T-cell (primary cell): ENCODE measurements at regions of chr12 and their contacts with region 1.

Region 1: GRCh38 chr12:56315622-56316473 is at the start of gene CNPY2:
- DNase-seq: peak; percentile 86 to 97 (median 91)
- ATAC-seq: peak; percentile 90 to 94 (median 92)
- H3K4me3 ChIP-seq: peak within 1 kb of the TSS; percentile 66 to 96
- H3K4me3 Mint-ChIP-seq: peak within 1 kb of the TSS; percentile 97 to 99 (median 97)
- H3K27ac ChIP-seq: peak within 1 kb of the TSS; percentile 79
- H3K27ac Mint-ChIP-seq: peak within 1 kb of the TSS; percentile 97 to 99
- H3K4me1 ChIP-seq: peaks cover 9 to 17% of the 10 kb centered on the region in 2 experiments
- H3K4me1 Mint-ChIP-seq: peaks cover 11 to 19% (median 19%) of the 10 kb centered on the region in 3 donors
- H3K27me3 ChIP-seq: no peaks in the 10 kb centered on the region
- H3K27me3 Mint-ChIP-seq: no peaks in the 10 kb centered on the region
- total RNA-seq, gene CNPY2: 52.9 to 92.8 (median 90.8) TPM

Region 2: DNA sequence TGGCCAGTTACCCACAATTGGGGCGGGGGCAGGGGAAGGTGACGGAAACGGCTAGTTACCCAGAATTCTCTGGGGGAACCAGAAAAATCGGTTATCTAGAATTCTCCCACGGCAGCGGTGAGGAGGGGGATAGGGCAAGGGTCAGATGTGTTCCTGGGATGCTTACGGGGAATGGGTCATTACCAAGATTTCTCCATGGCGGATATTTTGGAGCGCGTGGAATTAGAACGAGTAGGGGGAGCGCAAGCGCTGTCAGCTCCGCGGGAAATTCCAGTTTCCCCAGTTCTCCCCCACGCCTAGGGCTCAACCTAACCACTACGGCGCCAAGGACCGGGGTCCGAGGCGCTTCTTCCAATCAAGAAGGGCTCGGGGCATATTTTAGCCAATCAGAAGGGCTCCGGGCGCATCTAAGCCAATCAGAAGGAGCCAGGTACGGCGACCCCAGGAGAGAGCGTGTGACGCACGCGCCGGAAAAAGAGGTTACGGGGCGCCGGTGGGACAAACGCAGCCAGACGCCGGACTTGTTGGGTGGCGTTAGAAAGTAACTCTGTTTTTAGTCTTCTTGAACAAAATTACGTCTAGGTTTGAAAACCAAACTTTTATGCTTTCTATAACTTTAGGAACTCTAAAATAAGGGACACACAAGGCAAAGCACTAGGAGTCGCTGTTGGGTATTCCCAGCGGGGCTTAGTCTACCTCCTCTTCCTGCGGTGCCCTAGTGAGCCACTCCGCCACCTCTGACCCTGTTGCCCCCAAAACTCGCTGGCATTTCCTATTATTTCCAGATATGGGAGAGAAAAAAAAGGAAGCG is 18.0 kb after region 1 on chr12 and contains the start of gene PAN2:
- CTCF ChIA-PET with region 1: interaction called, 7 read pairs
- POLR2A ChIA-PET with region 1: interaction called in 1 of 2 experiments, 12 read pairs
- DNase-seq: peak; percentile 77 to 97 (median 93)
- ATAC-seq: peak; percentile 84 to 85 (median 85)
- H3K4me3 ChIP-seq: peak within 1 kb of the TSS; percentile 63 to 88
- H3K4me3 Mint-ChIP-seq: peak within 1 kb of the TSS; percentile 85 to 97 (median 92)
- H3K27ac ChIP-seq: peak within 1 kb of the TSS; percentile 98
- H3K27ac Mint-ChIP-seq: peak within 1 kb of the TSS; percentile 100
- H3K4me1 ChIP-seq: peaks cover 10 to 34% of the 10 kb centered on the region in 2 experiments
- H3K4me1 Mint-ChIP-seq: peaks cover 43 to 53% (median 47%) of the 10 kb centered on the region in 3 donors
- H3K27me3 ChIP-seq: no peaks in the 10 kb centered on the region
- H3K27me3 Mint-ChIP-seq: no peaks in the 10 kb centered on the region
- total RNA-seq, gene PAN2: 126 to 187 (median 164) TPM

Region 3: GRCh38 chr12:56359851-56360767 is 44.3 kb after region 1 on chr12 and contains the start of gene STAT2:
- CTCF ChIA-PET with region 1: interaction called in 1 of 2 experiments, 21 read pairs
- POLR2A ChIA-PET with region 1: interaction called, 6 to 17 read pairs
- DNase-seq: peak; percentile 97 to 100 (median 99)
- ATAC-seq: peak; percentile 95 to 98 (median 96)
- H3K4me3 ChIP-seq: peak within 1 kb of the TSS; percentile 75 to 85
- H3K4me3 Mint-ChIP-seq: peak within 1 kb of the TSS; percentile 84 to 96 (median 95)
- H3K27ac ChIP-seq: peak within 1 kb of the TSS; percentile 52
- H3K27ac Mint-ChIP-seq: peak within 1 kb of the TSS; percentile 94 to 98
- H3K4me1 ChIP-seq: peaks cover 8 to 24% of the 10 kb centered on the region in 2 experiments
- H3K4me1 Mint-ChIP-seq: peaks cover 29 to 37% (median 36%) of the 10 kb centered on the region in 3 donors
- H3K27me3 ChIP-seq: no peaks in the 10 kb centered on the region
- H3K27me3 Mint-ChIP-seq: no peaks in the 10 kb centered on the region
- total RNA-seq, gene STAT2: 117 to 187 (median 162) TPM

Region 4: GRCh38 chr12:56461235-56462159 is 145.6 kb after region 1 on chr12:
- CTCF ChIA-PET with region 1: interaction called, 4 to 15 read pairs
- POLR2A ChIA-PET with region 1: interaction called in 1 of 2 experiments, 5 read pairs
- DNase-seq: no peak
- ATAC-seq: no peak
- H3K4me3 ChIP-seq: no peak overlapping the region
- H3K4me3 Mint-ChIP-seq: no peak overlapping the region
- H3K27ac ChIP-seq: no peak overlapping the region
- H3K27ac Mint-ChIP-seq: no peak overlapping the region
- H3K4me1 ChIP-seq: peaks cover 0 to 5% of the 10 kb centered on the region in 2 experiments
- H3K4me1 Mint-ChIP-seq: peaks cover 4 to 6% (median 4%) of the 10 kb centered on the region in 3 donors
- H3K27me3 ChIP-seq: no peaks in the 10 kb centered on the region
- H3K27me3 Mint-ChIP-seq: no peaks in the 10 kb centered on the region

Region 5: DNA sequence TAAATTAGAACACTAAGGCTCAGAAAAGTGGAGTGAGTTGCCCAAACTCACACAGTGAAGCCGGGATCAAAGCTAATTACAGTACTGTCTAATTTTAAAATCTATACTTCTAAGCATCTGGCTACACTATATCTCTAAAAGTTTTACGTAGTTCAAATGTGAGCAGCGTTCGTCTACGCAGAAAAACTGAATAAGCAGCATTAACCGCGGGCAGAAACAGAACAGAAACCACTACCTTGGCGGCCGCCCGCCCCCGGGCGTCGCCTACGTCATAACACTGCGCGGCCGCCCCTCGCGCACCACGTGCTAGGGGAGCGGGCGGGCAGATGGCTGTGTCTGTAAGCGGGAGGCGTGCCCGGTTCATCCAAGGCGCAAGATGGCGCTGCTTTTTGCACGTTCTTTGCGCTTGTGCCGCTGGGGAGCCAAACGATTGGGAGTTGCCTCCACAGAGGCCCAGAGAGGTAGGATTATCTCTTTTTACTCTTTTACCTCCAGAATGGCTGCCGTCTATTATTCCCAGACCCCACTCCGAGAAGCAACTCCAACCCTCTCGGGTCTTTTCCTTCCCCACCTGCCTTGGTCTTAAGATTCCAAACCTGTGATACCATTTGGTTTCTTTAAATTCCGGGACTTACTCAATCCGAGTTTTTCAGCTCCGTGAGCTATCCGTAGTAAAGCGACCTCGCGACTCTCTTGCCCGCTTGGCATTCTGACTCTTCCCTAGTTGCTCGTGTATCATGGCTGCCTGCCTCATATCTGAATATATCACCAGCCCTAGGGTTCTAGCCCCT is 152.6 kb after region 1 on chr12 and contains the start of gene SPRYD4:
- CTCF ChIA-PET with region 1: interaction called, 4 to 15 read pairs
- POLR2A ChIA-PET with region 1: interaction called in 1 of 2 experiments, 12 read pairs
- DNase-seq: peak; percentile 86 to 97 (median 93)
- ATAC-seq: peak; percentile 94 to 98 (median 96)
- H3K4me3 ChIP-seq: peak within 1 kb of the TSS; percentile 68 to 84
- H3K4me3 Mint-ChIP-seq: peak within 1 kb of the TSS; percentile 94 to 97 (median 94)
- H3K27ac ChIP-seq: peak within 1 kb of the TSS; percentile 82
- H3K27ac Mint-ChIP-seq: peak within 1 kb of the TSS; percentile 89 to 98
- H3K4me1 ChIP-seq: peaks cover 5 to 23% of the 10 kb centered on the region in 2 experiments
- H3K4me1 Mint-ChIP-seq: peaks cover 29 to 33% (median 32%) of the 10 kb centered on the region in 3 donors
- H3K27me3 ChIP-seq: no peaks in the 10 kb centered on the region
- H3K27me3 Mint-ChIP-seq: no peaks in the 10 kb centered on the region
- total RNA-seq, gene SPRYD4: 4.7 to 7.3 (median 5.5) TPM

Region 6: GRCh38 chr12:56616925-56617324 is 301.1 kb after region 1 on chr12:
- CTCF ChIA-PET with region 1: no interaction called
- POLR2A ChIA-PET with region 1: no interaction called
- DNase-seq: no peak
- ATAC-seq: no peak
- H3K4me3 ChIP-seq: no peak overlapping the region
- H3K4me3 Mint-ChIP-seq: no peak overlapping the region
- H3K27ac ChIP-seq: no peak overlapping the region
- H3K27ac Mint-ChIP-seq: peak overlapping the region; percentile 22 to 42
- H3K4me1 ChIP-seq: no peaks in the 10 kb centered on the region
- H3K4me1 Mint-ChIP-seq: peaks cover 27 to 33% (median 32%) of the 10 kb centered on the region in 3 donors
- H3K27me3 ChIP-seq: no peaks in the 10 kb centered on the region
- H3K27me3 Mint-ChIP-seq: no peaks in the 10 kb centered on the region